A673 (cell line): ENCODE measurements at regions of chr5 and their contacts with region 1.

Region 1: GRCh38 chr5:39955156-39955555 is 530.4 kb upstream of the DAB2 start:
- DNase-seq: no peak
- H3K4me3 ChIP-seq: no peak overlapping the region
- H3K27ac ChIP-seq: no peak overlapping the region
- H3K4me1 ChIP-seq: no peaks in the 10 kb centered on the region
- H3K27me3 ChIP-seq: no peaks in the 10 kb centered on the region
- CTCF ChIP-seq: no peak

Region 2: GRCh38 chr5:40171971-40172370 is 216.8 kb after region 1 on chr5:
- CTCF ChIA-PET with region 1: no interaction called
- POLR2A ChIA-PET with region 1: no interaction called
- intact Hi-C with region 1: loop called (anchors 10 kb)
- DNase-seq: no peak
- H3K4me3 ChIP-seq: no peak overlapping the region
- H3K27ac ChIP-seq: no peak overlapping the region
- H3K4me1 ChIP-seq: no peaks in the 10 kb centered on the region
- H3K27me3 ChIP-seq: no peaks in the 10 kb centered on the region
- CTCF ChIP-seq: no peak